Activated CD8-positive, alpha-beta memory T cell treated with anti-CD3 and anti-CD28 coated beads, Interleukin-2, amount 10 ng/mL, durations not matched to agents 7 days and 5 days (primary cell): ENCODE measurements at regions of chr15 and their contacts with region 1.

Region 1: DNA sequence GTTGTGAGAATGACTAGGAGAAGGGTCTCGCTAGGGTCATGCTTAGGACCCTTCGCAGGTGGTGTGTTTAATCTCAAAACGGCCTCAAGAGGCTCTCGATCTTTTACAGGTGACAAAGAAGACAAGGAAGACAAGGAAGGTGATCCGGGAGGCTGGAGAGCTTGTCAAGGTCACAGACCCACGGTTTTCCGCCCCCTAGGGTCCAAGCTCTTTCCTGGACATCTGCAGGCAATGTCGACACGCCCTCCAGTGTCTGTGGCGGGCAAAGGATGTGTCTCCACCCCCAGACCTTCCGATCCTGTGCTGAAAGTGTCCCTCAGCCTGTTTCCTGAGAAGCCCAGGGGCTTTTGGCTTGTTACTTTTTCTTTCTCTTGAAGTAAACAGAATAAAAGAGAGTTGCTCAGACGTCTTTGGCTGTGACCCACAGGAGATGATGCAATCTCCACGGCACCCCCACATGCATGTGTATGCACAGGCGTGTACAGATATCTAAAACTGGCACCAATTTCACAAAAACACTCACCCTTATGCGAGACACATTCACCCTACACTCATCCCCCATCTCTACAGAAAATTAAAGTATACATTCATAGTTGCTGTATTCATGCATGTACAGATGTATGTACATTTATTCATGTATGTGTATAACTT is 108.8 kb downstream of the KLF13 start:
- DNase-seq: peak; percentile 95
- ATAC-seq: peak; percentile 72
- H3K4me3 Mint-ChIP-seq: peak overlapping the region; percentile 68
- H3K27ac Mint-ChIP-seq: peak overlapping the region; percentile 94
- H3K4me1 Mint-ChIP-seq: peaks cover 70% of the 10 kb centered on the region
- H3K27me3 Mint-ChIP-seq: no peaks in the 10 kb centered on the region

Region 2: GRCh38 chr15:31215490-31216214 is 219.7 kb before region 1 on chr15:
- CTCF ChIA-PET with region 1: interaction called, 19 read pairs
- DNase-seq: peak; percentile 90
- ATAC-seq: peak; percentile 88
- H3K4me3 Mint-ChIP-seq: peak overlapping the region; percentile 69
- H3K27ac Mint-ChIP-seq: peak overlapping the region; percentile 81
- H3K4me1 Mint-ChIP-seq: peaks cover 29% of the 10 kb centered on the region
- H3K27me3 Mint-ChIP-seq: no peaks in the 10 kb centered on the region

Region 3: GRCh38 chr15:31326156-31326732 is 109.1 kb before region 1 on chr15:
- CTCF ChIA-PET with region 1: interaction called, 15 read pairs
- DNase-seq: peak; percentile 99
- ATAC-seq: peak; percentile 80
- H3K4me3 Mint-ChIP-seq: peak overlapping the region; percentile 64
- H3K27ac Mint-ChIP-seq: peak overlapping the region; percentile 93
- H3K4me1 Mint-ChIP-seq: peaks cover 40% of the 10 kb centered on the region
- H3K27me3 Mint-ChIP-seq: no peaks in the 10 kb centered on the region

Region 4: GRCh38 chr15:31391687-31392671 is 43.4 kb before region 1 on chr15:
- CTCF ChIA-PET with region 1: interaction called, 57 read pairs
- DNase-seq: peak; percentile 90
- ATAC-seq: peak; percentile 86
- H3K4me3 Mint-ChIP-seq: peak overlapping the region; percentile 91
- H3K27ac Mint-ChIP-seq: peak overlapping the region; percentile 92
- H3K4me1 Mint-ChIP-seq: peaks cover 56% of the 10 kb centered on the region
- H3K27me3 Mint-ChIP-seq: no peaks in the 10 kb centered on the region

Region 5: DNA sequence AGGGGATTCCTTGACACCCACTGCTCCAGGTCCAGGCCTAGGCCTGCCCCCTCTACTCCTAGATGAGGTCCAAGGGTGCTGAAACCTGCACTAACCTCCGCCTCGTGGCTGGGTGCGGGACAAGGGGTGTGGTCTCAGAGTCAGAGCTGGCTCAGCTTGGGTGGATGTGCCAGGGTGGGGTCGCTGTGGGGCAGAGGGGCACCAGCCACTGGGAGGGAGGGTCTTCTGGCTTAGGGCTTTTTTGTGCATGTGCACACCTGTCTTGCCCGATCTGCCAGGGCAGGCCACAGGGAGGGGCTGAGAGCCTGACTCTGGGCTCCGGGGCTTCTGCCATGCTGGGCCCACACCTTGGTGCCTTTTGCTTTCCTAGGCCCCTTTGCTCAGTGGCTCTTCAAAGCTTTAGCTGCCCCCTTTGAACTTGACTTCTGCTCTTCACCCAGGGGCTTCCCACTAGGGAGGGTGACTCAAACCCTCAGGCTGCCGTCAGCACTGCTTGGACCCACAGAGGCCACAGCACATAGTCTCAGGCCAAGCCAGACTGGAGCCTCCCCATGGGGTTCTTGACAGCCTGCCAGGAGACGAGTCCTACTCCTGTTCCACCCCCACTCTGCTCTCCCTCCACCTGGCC is 35.7 kb before region 1 on chr15:
- CTCF ChIA-PET with region 1: interaction called, 57 read pairs
- DNase-seq: peak; percentile 49
- ATAC-seq: peak; percentile 53
- H3K4me3 Mint-ChIP-seq: no peak overlapping the region
- H3K27ac Mint-ChIP-seq: peak overlapping the region; percentile 21
- H3K4me1 Mint-ChIP-seq: peaks cover 44% of the 10 kb centered on the region
- H3K27me3 Mint-ChIP-seq: no peaks in the 10 kb centered on the region

Region 6: DNA sequence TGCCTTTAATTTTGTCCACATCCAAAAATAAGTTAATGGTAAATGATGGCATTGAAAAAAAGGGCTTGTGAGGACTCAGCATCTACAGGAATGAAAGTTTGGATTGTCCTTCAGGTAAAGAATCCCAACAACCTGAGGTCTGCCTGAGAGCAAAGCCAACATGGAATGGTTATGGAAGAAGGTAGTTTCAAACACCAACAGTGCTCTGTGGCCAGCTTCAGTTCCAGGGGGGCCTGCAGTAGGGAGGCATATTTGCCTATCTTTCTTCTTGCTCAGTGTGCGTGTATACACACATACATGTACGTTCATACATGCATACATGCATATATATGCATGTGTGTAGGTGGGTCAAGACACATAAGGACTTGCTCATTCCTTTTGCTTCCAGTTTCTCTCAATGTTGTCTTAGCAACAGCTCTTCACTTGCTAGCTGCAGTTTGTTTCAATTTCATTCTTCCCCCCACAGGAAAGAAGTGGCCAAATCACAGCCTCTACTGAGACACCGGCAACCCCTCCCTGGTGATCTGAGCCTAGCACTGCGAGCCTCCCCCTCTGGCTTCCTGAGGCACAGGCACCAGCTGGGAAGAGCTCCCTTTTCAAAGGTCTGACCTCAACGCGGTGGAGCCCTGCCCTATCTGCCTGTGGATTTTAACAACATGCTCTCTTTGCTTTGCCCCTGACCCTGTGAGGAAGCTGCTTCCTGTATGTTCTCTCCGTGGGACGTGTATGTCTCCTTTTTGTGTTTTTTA is 37.4 kb after region 1 on chr15:
- CTCF ChIA-PET with region 1: interaction called, 33 read pairs
- DNase-seq: peak; percentile 80
- ATAC-seq: peak; percentile 94
- H3K4me3 Mint-ChIP-seq: peak overlapping the region; percentile 69
- H3K27ac Mint-ChIP-seq: peak overlapping the region; percentile 93
- H3K4me1 Mint-ChIP-seq: peaks cover 38% of the 10 kb centered on the region
- H3K27me3 Mint-ChIP-seq: no peaks in the 10 kb centered on the region

Region 7: GRCh38 chr15:31483053-31483985 is 47.9 kb after region 1 on chr15:
- CTCF ChIA-PET with region 1: interaction called, 272 read pairs
- DNase-seq: peak; percentile 79
- ATAC-seq: peak; percentile 72
- H3K4me3 Mint-ChIP-seq: peak overlapping the region; percentile 89
- H3K27ac Mint-ChIP-seq: peak overlapping the region; percentile 96
- H3K4me1 Mint-ChIP-seq: peaks cover 71% of the 10 kb centered on the region
- H3K27me3 Mint-ChIP-seq: no peaks in the 10 kb centered on the region

Region 8: DNA sequence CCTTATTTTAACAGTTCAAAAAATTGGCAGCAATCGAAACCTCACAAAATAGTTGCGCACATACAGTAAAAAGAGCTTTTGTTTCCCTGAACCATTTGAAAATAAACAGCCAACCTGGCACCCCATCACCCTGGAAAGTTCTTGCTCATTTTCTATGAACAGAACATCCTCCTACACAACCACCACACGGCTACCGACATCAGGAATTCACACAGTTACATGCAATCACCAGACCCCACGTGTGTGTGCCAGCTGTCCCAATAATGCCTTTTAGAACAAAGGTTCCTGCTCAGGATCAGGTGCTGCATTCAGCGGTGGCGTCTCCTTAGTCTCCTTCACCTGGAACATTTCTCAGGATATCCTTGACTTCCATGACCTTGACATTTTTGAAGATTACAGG is 77.8 kb after region 1 on chr15:
- CTCF ChIA-PET with region 1: no interaction called
- DNase-seq: peak; percentile 23
- ATAC-seq: no peak
- H3K4me3 Mint-ChIP-seq: no peak overlapping the region
- H3K27ac Mint-ChIP-seq: no peak overlapping the region
- H3K4me1 Mint-ChIP-seq: peaks cover 7% of the 10 kb centered on the region
- H3K27me3 Mint-ChIP-seq: no peaks in the 10 kb centered on the region